MCF 10A (cell line): ENCODE measurements at regions of chr9 and their contacts with region 1.

Region 1: DNA sequence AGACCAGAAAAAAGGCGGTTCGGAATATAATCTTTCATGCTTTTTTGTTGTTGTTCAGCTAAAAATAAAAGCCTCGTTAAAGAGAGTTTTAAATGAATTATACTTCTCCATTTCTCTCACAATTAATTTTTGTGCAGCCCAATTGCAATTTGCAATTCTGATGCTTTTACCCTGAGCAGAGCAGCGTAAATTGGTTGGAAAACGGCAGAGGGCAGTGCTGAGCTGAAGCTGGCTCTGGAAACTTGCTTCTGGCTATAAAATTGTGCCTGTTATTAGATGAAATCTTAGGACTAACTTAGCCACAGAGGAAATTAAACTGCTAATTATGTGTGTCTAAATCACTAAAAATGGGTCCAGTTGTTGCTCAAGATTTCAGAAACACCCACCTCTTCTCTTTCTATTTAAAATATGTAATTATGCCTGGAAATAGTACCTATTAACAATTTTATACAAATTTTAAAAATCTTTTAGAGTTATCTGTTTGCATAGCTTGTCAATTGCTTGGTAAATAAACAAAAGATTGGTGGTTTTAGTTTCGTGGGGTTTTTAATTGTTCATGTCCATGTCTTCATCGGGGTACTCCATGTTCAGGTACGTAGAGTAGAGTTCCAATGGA is 441.8 kb upstream of the TLE4 start:
- DNase-seq: peak; percentile 60
- H3K4me3 Mint-ChIP-seq: no peak overlapping the region
- H3K27ac Mint-ChIP-seq: no peak overlapping the region
- H3K4me1 Mint-ChIP-seq: peaks cover 6% of the 10 kb centered on the region
- H3K27me3 Mint-ChIP-seq: no peaks in the 10 kb centered on the region
- CTCF ChIP-seq: peak; percentile 63

Region 2: GRCh38 chr9:78601957-78602565 is 527.9 kb before region 1 on chr9:
- CTCF ChIA-PET with region 1: interaction called, 6 read pairs
- POLR2A ChIA-PET with region 1: interaction called, 4 read pairs
- intact Hi-C with region 1: loop called (anchors 1 kb)
- DNase-seq: peak; percentile 67
- H3K4me3 Mint-ChIP-seq: no peak overlapping the region
- H3K27ac Mint-ChIP-seq: no peak overlapping the region
- H3K4me1 Mint-ChIP-seq: no peaks in the 10 kb centered on the region
- H3K27me3 Mint-ChIP-seq: no peaks in the 10 kb centered on the region
- CTCF ChIP-seq: peak; percentile 82

Region 3: DNA sequence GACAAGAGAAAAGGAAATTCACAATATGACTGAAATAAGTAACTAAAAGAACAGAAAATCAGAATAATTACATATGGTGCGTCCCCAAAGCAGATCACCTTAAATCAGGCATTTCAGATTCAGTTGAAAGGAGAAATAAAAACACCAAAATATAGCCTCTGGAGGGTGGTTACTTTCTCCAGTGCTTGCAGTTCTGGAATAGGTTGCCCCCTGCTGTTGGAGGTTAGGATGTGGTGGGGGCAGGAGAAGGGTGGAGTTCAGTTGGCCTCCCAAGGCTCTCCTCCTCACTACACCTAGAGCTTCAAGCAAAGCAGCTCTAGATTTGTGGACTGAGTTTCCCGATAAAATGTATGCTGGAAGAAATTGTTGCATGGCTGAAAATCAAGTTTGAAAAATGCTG is 103.6 kb after region 1 on chr9:
- CTCF ChIA-PET with region 1: interaction called, 11 read pairs
- POLR2A ChIA-PET with region 1: interaction called, 5 read pairs
- intact Hi-C with region 1: loop called (anchors 2 kb)
- DNase-seq: peak; percentile 65
- H3K4me3 Mint-ChIP-seq: no peak overlapping the region
- H3K27ac Mint-ChIP-seq: no peak overlapping the region
- H3K4me1 Mint-ChIP-seq: no peaks in the 10 kb centered on the region
- H3K27me3 Mint-ChIP-seq: no peaks in the 10 kb centered on the region
- CTCF ChIP-seq: peak; percentile 45

Region 4: DNA sequence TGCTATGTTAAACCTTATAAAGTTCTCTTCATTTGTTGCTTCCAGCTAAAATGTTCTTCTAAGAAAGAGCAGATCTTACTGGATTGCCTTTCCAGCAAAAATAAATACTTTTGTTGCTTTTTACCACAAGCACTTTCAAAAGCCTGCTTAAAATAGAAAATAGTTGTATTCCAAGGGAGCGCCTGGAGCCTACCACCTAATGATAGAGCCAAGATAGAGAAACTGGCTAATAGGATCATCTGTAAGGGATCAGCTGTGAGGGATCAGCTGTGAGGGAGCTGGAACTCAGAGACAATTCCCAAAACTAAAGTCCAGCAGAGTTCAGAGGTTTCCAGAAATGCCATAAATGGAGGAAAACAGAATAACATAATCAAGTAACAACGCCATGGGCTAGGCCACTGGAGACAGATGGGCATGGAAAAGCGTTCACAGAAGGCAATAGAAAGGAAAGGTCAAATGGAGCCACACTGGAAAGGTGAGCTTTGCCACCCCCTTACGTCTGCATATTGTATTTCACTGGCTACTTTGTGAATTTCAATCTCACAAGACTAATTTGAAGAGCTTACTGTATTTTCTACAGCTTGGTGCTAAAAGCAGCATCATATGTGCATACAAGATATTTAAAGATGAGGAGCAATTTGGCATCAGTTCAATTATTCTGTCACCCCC is 301.2 kb after region 1 on chr9:
- CTCF ChIA-PET with region 1: interaction called, 6 read pairs
- POLR2A ChIA-PET with region 1: no interaction called
- intact Hi-C with region 1: loop called (anchors 1 kb)
- DNase-seq: peak; percentile 13
- H3K4me3 Mint-ChIP-seq: no peak overlapping the region
- H3K27ac Mint-ChIP-seq: no peak overlapping the region
- H3K4me1 Mint-ChIP-seq: no peaks in the 10 kb centered on the region
- H3K27me3 Mint-ChIP-seq: no peaks in the 10 kb centered on the region
- CTCF ChIP-seq: no peak

Region 5: DNA sequence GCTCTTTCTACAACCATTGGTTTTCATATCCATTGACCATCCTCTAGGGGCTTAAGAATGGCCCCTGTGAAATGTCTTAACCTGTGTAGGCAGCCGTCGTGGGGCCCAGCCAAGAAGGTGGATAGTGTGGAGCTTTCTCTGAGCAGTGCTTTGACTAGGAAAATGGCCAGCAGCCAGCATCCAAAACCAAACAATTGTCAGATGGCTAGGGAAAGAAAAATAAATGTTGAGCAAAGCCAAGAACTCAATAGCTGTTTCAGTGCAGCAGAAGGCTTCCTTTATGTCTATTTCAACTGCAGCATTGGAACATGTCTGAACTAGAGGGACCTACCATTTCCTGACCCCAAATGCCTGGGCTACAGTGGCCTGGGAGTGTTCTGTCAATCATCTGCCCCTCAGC is 816.7 kb after region 1 on chr9:
- CTCF ChIA-PET with region 1: no interaction called
- POLR2A ChIA-PET with region 1: no interaction called
- intact Hi-C with region 1: loop called (anchors 5 kb)
- DNase-seq: no peak
- H3K4me3 Mint-ChIP-seq: no peak overlapping the region
- H3K27ac Mint-ChIP-seq: no peak overlapping the region
- H3K4me1 Mint-ChIP-seq: no peaks in the 10 kb centered on the region
- H3K27me3 Mint-ChIP-seq: no peaks in the 10 kb centered on the region
- CTCF ChIP-seq: no peak